ENCODE measurements at regions of chr1 and their contacts with region 1.

Region 1: DNA sequence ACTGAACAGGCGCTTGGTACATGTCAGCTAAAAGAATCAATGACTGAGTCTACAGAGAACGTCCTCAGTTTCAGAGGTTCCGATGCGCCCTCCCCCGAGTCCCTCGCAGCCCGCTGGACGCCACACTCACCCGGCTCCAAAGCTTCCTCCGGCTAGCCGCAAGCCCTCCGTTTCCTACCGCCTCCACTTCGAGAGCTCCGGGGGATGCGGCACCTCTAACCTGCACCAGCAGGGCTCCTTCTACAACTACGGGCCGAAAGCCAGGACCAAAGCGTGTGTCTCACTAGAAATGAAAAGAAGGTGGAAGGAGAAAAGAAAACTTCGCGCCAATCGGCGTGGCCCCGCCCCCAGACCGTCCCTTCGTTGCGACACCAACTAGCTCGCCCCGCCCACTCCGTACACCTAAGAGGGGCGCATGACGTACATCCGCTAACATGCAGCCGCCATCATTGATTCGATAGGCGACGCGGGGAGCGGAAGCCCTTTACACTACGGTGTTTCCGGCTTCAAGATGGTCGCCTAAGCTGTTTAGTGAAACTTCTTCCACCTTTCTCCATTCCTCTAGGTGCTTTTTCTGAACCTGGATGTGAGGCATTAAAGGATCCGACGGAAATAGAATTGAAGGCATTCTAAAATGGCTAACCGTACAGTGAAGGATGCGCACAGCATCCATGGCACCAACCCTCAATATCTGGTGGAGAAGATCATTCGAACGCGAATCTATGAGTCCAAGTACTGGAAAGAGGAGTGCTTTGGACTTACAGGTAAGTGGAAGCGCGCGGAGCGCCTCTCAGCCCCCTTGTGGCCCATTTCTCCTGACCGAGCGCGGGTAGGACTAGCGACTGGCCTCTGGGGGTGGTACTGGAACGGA is at the starts of genes ORC1 and PRPF38A:
- DNase-seq: peak; percentile 99
- H3K4me3 Mint-ChIP-seq: peak within 1 kb of the TSS; percentile 99
- H3K27ac Mint-ChIP-seq: peak within 1 kb of the TSS; percentile 99
- H3K4me1 Mint-ChIP-seq: peaks cover 63% of the 10 kb centered on the region
- H3K27me3 Mint-ChIP-seq: no peaks in the 10 kb centered on the region
- total RNA-seq, gene ORC1: 30.3 to 36.7 TPM
- total RNA-seq, gene PRPF38A: 98.1 to 103 TPM

Region 2: GRCh38 chr1:52393174-52393573 is 11.2 kb before region 1 on chr1:
- CTCF ChIA-PET with region 1: interaction called, 13 read pairs
- POLR2A ChIA-PET with region 1: no interaction called
- DNase-seq: no peak
- H3K4me3 Mint-ChIP-seq: no peak overlapping the region
- H3K27ac Mint-ChIP-seq: no peak overlapping the region
- H3K4me1 Mint-ChIP-seq: peaks cover 6% of the 10 kb centered on the region
- H3K27me3 Mint-ChIP-seq: no peaks in the 10 kb centered on the region

Region 3: GRCh38 chr1:52511851-52512615 is 107.7 kb after region 1 on chr1:
- CTCF ChIA-PET with region 1: no interaction called
- POLR2A ChIA-PET with region 1: no interaction called
- DNase-seq: no peak
- H3K4me3 Mint-ChIP-seq: no peak overlapping the region
- H3K27ac Mint-ChIP-seq: no peak overlapping the region
- H3K4me1 Mint-ChIP-seq: peaks cover 15% of the 10 kb centered on the region
- H3K27me3 Mint-ChIP-seq: no peaks in the 10 kb centered on the region

Region 4: GRCh38 chr1:52534928-52535764 is 130.8 kb after region 1 on chr1:
- CTCF ChIA-PET with region 1: no interaction called
- POLR2A ChIA-PET with region 1: no interaction called
- DNase-seq: no peak
- H3K4me3 Mint-ChIP-seq: no peak overlapping the region
- H3K27ac Mint-ChIP-seq: peak overlapping the region; percentile 43
- H3K4me1 Mint-ChIP-seq: peaks cover 27% of the 10 kb centered on the region
- H3K27me3 Mint-ChIP-seq: no peaks in the 10 kb centered on the region